ENCODE measurements at regions of chr16 and their contacts with region 1.

Region 1: DNA sequence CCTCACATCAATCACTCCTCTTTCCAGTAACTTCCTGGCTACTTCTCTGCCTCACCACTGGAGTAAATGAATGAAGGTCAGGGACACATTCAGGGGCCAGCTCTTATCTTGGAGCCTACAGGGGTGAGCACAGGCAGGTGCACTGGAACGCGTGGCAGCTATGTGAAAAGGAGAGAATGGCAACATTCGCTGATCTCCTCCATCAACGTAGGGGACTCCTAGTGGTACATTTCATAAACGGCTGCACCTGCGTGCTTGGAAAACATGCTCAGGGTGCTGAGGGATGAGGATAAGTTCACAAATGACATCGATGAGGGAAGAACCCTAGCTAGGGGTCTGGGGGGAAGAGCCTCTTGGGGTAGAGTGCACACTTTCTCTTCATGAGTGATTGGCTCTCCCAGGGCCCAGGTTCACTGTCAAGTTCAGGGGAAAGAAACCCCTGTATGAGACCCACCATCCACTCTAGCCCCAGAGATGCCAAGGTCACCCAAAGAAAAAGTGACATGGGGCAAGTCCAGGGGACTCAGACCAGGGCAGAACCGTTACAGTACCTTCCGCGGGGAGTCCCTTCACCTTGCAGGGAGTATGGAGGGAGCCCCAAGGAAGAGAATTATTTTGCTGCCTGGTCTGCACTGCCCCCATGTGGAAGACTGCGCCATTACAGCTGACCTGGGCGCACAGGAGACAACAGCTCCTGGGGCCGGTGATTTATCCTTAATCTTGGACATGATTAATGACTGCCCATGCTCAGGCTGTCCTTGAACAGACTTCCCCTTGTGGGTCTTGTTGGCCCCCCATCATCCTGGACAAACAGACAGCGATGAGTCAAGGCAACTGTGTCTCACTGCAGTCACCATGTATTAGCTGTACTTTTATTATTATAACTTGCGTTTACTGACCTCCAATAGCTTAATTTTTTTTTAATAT is 30.1 kb downstream of the VAC14 start:
- DNase-seq: peak; percentile 77 to 92 (median 80)
- H3K4me3 ChIP-seq: no peak overlapping the region
- H3K27ac ChIP-seq: peak overlapping the region in 3 of 5 donors; percentile 17 to 64 (median 56)
- H3K4me1 ChIP-seq: peaks cover 0 to 14% of the 10 kb centered on the region in 2 donors
- H3K27me3 ChIP-seq: no peaks in the 10 kb centered on the region
- CTCF ChIP-seq: peak; percentile 91 to 98 (median 96)
- POLR2A ChIP-seq: no peak

Region 2: DNA sequence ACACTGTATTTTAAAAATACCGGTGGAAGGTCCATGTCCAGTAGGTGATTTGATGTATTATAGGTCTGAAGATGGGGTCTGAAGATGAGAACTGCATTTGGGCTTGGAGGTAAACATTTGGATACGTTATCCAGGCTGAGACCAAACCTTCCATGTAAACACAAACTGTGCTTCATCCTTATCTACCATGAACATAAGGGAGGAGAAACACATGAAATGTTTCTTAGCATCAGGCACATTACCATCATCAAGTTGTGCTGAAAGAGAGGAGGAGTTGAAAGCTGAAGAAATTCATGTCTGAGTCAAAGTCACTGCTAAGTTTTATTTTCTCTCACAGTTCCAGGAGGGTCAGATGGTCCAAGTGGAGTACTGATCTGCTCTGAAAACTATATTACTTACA is 235.9 kb before region 1 on chr16:
- intact Hi-C with region 1: loop called in 1 of 2 experiments (anchors 10 kb)
- DNase-seq: no peak
- H3K4me3 ChIP-seq: no peak overlapping the region
- H3K27ac ChIP-seq: no peak overlapping the region
- H3K4me1 ChIP-seq: peaks cover 0 to under 1% of the 10 kb centered on the region in 2 donors
- H3K27me3 ChIP-seq: no peaks in the 10 kb centered on the region
- CTCF ChIP-seq: no peak
- POLR2A ChIP-seq: no peak

Region 3: GRCh38 chr16:70646260-70647241 is 124.3 kb before region 1 on chr16 and contains the start of gene IL34:
- intact Hi-C with region 1: no loop called
- DNase-seq: peak; percentile 44 to 80 (median 66)
- H3K4me3 ChIP-seq: peak within 1 kb of the TSS in 1 of 4 donors; percentile 12
- H3K27ac ChIP-seq: peak within 1 kb of the TSS in 4 of 5 donors; percentile 11 to 83 (median 50)
- H3K4me1 ChIP-seq: peaks cover 0 to 15% of the 10 kb centered on the region in 2 donors
- H3K27me3 ChIP-seq: no peaks in the 10 kb centered on the region
- CTCF ChIP-seq: no peak
- POLR2A ChIP-seq: no peak
- total RNA-seq, gene IL34: 1.2 to 62.9 (median 38.1) TPM

Region 4: GRCh38 chr16:70661918-70662641 is 108.8 kb before region 1 on chr16:
- intact Hi-C with region 1: no loop called
- DNase-seq: peak in 3 of 7 donors; percentile 31 to 38 (median 33)
- H3K4me3 ChIP-seq: no peak overlapping the region
- H3K27ac ChIP-seq: peak overlapping the region in 1 of 5 donors; percentile 54
- H3K4me1 ChIP-seq: no peaks in the 10 kb centered on the region
- H3K27me3 ChIP-seq: no peaks in the 10 kb centered on the region
- CTCF ChIP-seq: no peak
- POLR2A ChIP-seq: no peak

Region 5: GRCh38 chr16:70679666-70680494 is 91.0 kb before region 1 on chr16:
- intact Hi-C with region 1: loop called (anchors 2 kb)
- DNase-seq: no peak
- H3K4me3 ChIP-seq: no peak overlapping the region
- H3K27ac ChIP-seq: peak overlapping the region in 3 of 5 donors; percentile 60 to 96 (median 87)
- H3K4me1 ChIP-seq: peaks cover 36 to 48% of the 10 kb centered on the region in 2 donors
- H3K27me3 ChIP-seq: no peaks in the 10 kb centered on the region
- CTCF ChIP-seq: peak in 3 of 6 experiments; percentile 68 to 89 (median 69)
- POLR2A ChIP-seq: no peak

Region 6: DNA sequence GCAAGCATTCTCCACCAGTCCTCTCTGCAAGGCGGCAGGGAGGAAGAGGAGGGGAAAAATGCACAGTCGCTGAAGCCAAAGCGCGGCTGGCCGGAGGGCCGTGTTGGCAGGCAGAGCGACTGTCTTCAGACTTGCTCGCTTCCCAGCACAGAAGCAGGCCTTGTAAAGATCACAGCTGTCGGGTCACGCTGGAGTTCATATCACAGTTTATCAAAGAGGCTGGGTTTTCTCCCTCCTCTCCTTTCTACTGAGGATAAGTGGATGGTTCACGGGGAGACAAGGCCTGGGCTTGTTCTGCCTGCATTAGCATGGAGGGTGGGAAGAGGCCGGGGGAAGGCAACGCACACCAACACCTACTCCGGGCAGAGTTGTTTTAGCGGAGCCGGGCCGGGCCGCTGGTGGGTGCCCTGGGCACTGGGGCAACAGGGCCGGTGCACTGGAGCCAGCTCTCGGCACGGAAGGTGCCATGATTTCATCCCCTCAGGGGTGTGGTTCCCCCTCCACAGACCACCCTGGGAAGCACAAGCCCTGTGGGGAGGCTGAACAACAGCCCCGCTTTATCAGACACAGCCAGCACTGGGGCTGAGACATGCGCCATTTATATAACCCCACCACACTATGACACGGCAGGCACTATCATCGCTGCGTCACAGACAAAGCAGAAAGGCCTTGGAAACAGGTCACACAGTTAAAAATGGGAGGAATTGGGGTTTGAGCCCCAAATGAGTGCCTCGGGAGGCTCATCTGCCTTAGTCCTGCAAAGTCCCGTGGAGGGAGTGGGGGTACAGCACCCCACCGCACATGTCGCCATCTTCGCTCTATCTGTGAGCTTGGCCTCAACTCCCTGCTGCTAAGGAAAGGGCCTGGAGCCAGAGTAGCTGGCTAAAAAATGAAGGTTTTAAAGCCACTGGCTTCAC is 44.7 kb before region 1 on chr16:
- intact Hi-C with region 1: no loop called
- DNase-seq: peak in 6 of 7 donors; percentile 43 to 84 (median 64)
- H3K4me3 ChIP-seq: no peak overlapping the region
- H3K27ac ChIP-seq: peak overlapping the region; percentile 37 to 93 (median 81)
- H3K4me1 ChIP-seq: peaks cover 27 to 28% of the 10 kb centered on the region in 2 donors
- H3K27me3 ChIP-seq: no peaks in the 10 kb centered on the region
- CTCF ChIP-seq: no peak
- POLR2A ChIP-seq: no peak